ENCODE measurements at regions of chr9 and their contacts with region 1.

Region 1: GRCh38 chr9:78121488-78121887 is 89.9 kb upstream of the GNAQ start:
- DNase-seq: peak; percentile 86
- H3K4me3 Mint-ChIP-seq: no peak overlapping the region
- H3K27ac Mint-ChIP-seq: no peak overlapping the region
- H3K4me1 Mint-ChIP-seq: peaks cover 27% of the 10 kb centered on the region
- H3K27me3 Mint-ChIP-seq: peaks cover 16% of the 10 kb centered on the region

Region 2: DNA sequence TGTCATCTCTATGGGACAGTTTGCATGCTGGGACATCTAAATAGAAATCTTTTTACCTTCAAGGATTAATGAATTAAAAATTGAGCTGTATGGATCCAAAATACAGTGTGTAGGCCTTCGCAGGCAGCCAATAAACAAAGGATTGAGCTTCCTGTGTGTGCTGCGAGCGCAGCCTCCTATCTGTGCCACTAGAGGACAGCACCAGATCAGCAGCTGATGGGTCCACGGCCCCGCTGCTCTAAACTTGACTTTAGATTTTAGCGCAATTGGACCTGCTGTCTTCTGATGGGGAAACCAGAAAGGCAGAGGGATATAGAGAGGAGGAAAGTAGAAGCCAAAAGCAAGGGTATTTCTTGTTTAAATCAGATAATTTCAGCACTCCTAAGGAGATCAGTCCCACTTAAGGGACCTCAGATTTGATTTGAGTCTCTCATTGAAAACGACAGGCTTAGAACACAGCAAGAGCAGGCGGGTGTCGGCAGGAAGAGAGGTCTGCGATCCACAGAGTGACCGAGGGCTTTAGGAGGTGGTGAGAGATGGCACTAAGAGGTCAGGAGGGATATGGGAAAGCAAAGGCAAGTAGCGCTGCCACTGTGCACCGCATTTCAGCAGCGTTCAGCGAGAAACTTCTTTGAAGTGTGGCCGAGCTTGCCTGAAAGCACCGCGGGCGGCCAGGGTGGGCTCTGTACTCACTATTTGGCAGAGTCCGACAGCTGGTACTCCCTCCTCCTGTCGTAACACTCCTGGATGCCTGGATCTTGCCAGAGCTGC is 687.6 kb before region 1 on chr9:
- intact Hi-C with region 1: loop called (anchors 5 kb)
- DNase-seq: peak; percentile 82
- H3K4me3 Mint-ChIP-seq: no peak overlapping the region
- H3K27ac Mint-ChIP-seq: no peak overlapping the region
- H3K4me1 Mint-ChIP-seq: no peaks in the 10 kb centered on the region
- H3K27me3 Mint-ChIP-seq: peaks cover 2% of the 10 kb centered on the region

Region 3: GRCh38 chr9:77793904-77794303 is 327.6 kb before region 1 on chr9:
- intact Hi-C with region 1: no loop called
- DNase-seq: no peak
- H3K4me3 Mint-ChIP-seq: no peak overlapping the region
- H3K27ac Mint-ChIP-seq: no peak overlapping the region
- H3K4me1 Mint-ChIP-seq: peaks cover 6% of the 10 kb centered on the region
- H3K27me3 Mint-ChIP-seq: no peaks in the 10 kb centered on the region

Region 4: GRCh38 chr9:77977210-77977611 is 144.3 kb before region 1 on chr9:
- intact Hi-C with region 1: loop called (anchors 1 kb)
- DNase-seq: peak; percentile 84
- H3K4me3 Mint-ChIP-seq: peak overlapping the region; percentile 68
- H3K27ac Mint-ChIP-seq: peak overlapping the region; percentile 91
- H3K4me1 Mint-ChIP-seq: peaks cover 44% of the 10 kb centered on the region
- H3K27me3 Mint-ChIP-seq: no peaks in the 10 kb centered on the region

Region 5: DNA sequence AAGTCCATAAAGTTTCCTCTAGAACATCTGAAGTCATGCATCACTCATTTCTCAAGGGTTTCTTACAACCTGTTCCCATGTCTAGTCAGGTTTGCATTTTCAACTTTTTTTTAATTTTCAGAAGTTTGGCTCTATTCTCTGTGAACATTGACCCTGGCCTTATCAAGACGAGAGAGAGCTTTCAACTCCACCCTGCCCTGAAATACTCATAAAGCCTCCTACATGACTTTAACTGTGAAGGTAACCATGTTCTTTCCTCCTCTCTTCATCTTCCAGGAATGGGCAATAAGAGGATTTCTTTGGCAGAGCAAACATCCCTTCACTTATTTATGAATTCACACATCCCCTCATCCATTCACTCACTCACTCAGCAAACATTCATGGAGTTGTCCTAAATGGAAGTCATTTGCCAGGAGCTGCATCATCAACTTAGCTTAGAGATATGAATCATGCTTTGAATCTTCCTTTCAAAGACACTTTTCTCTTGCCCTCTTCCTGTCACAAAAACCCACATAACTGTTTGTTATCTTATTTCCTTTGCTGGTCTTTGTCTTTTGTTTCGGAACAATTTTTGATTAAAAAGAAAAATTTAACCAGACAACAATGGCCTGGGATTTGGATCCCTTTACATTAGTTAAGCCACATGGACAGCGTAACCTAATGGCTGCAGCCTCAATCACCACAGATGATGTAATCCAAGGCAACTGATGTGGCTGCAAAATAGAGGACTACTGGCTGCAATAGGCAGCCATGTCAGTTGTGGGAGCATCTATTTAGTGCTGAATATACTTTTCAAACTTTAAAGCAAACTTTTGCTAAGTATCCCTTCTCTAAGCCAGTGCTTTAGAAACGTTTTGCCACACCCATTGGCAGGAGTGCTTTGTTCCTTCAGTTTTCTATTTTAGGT is 46.9 kb before region 1 on chr9:
- intact Hi-C with region 1: loop called (anchors 5 kb)
- DNase-seq: peak; percentile 74
- H3K4me3 Mint-ChIP-seq: peak overlapping the region; percentile 53
- H3K27ac Mint-ChIP-seq: peak overlapping the region; percentile 73
- H3K4me1 Mint-ChIP-seq: peaks cover 46% of the 10 kb centered on the region
- H3K27me3 Mint-ChIP-seq: no peaks in the 10 kb centered on the region

Region 6: DNA sequence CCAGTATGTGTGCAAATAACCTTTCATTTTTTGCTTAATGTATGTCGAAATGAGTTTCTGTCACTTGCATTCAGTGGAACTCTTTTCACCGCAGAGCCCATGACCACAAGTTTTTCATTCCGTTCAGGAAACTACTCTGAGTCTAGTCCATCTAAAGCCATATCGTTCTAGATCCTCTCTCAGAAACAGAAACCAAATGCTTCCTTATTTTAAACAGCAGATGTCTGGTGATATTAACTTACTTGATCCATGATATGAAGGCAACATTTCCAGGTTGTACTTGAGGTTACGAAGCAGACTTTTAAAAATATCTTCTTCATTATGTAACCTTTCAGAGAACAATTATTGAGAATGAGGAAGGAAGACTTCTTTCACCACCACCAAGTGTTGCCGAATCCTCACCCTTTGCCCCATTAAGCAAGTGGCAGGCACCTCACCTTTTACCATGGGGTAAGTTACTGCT is 17.5 kb before region 1 on chr9:
- intact Hi-C with region 1: loop called (anchors 1 kb)
- DNase-seq: peak; percentile 87
- H3K4me3 Mint-ChIP-seq: peak overlapping the region; percentile 46
- H3K27ac Mint-ChIP-seq: peak overlapping the region; percentile 38
- H3K4me1 Mint-ChIP-seq: peaks cover 24% of the 10 kb centered on the region
- H3K27me3 Mint-ChIP-seq: no peaks in the 10 kb centered on the region

Region 7: GRCh38 chr9:78213712-78214111 is 92.2 kb after region 1 on chr9:
- intact Hi-C with region 1: loop called (anchors 5 kb)
- DNase-seq: peak; percentile 66
- H3K4me3 Mint-ChIP-seq: peak overlapping the region; percentile 34
- H3K27ac Mint-ChIP-seq: no peak overlapping the region
- H3K4me1 Mint-ChIP-seq: peaks cover 30% of the 10 kb centered on the region
- H3K27me3 Mint-ChIP-seq: no peaks in the 10 kb centered on the region

Measured in activated CD4-positive, alpha-beta T cell treated with anti-CD3 and anti-CD28 coated beads, Interleukin-2, amount 10 ng/mL, durations not matched to agents 24 days and 14 days (primary cell).